ENCODE measurements at regions of chr7 and their contacts with region 1.

Region 1: DNA sequence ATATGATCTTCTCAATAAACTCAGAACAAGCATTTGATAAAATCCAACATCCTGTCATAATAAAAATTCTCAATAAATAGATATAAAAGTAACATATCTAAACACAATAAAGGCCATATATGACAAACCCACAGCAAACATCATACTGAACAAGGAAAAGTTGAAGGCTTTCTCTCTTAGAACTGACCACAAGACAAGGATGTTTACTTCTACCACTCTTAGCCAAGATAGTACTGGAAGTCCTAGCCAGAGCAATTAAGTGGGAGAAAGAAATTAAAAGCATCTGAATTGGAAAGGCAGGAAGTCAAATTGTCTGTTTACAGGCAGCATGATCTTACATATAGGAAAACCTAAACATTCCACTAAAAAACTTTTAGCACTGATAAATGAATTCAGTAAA is 510.9 kb downstream of the ANKRD7 start:
- DNase-seq: no peak
- H3K4me3 ChIP-seq: no peak overlapping the region
- H3K27ac ChIP-seq: no peak overlapping the region
- H3K4me1 ChIP-seq: no peaks in the 10 kb centered on the region
- H3K27me3 ChIP-seq: no peaks in the 10 kb centered on the region
- CTCF ChIP-seq: no peak
- EP300 ChIP-seq: no peak
- POLR2A ChIP-seq: no peak

Region 2: GRCh38 chr7:117682681-117683385 is 1052.6 kb before region 1 on chr7:
- intact Hi-C with region 1: loop called in 1 of 4 experiments (anchors 5 kb)
- DNase-seq: no peak
- H3K4me3 ChIP-seq: no peak overlapping the region
- H3K27ac ChIP-seq: no peak overlapping the region
- H3K4me1 ChIP-seq: no peaks in the 10 kb centered on the region
- H3K27me3 ChIP-seq: no peaks in the 10 kb centered on the region
- CTCF ChIP-seq: no peak
- EP300 ChIP-seq: no peak
- POLR2A ChIP-seq: no peak

Measured in ovary (tissue), 10 donors.